Activated T-helper 1 cell treated with anti-CD3 and anti-CD28 coated beads, Interleukin-12 subunit alpha, Interleukin-12 subunit beta, Interleukin-2, Interleukin-4 antibody, amounts not matched to agents 30 ng/mL and 10 ng/mL and 1 ng/mL, durations not matched to agents 14 hours and 24 hours and 36 hours (primary cell): ENCODE measurements at regions of chr10 and their contacts with region 1.

Region 1: GRCh38 chr10:62811159-62811875 is 4.8 kb downstream of the EGR2 start:
- DNase-seq: peak; percentile 71
- H3K4me3 Mint-ChIP-seq: peak overlapping the region; percentile 98
- H3K27ac Mint-ChIP-seq: peak overlapping the region; percentile 94
- H3K4me1 Mint-ChIP-seq: peaks cover 84% of the 10 kb centered on the region
- H3K27me3 Mint-ChIP-seq: peaks cover 8% of the 10 kb centered on the region

Region 2: DNA sequence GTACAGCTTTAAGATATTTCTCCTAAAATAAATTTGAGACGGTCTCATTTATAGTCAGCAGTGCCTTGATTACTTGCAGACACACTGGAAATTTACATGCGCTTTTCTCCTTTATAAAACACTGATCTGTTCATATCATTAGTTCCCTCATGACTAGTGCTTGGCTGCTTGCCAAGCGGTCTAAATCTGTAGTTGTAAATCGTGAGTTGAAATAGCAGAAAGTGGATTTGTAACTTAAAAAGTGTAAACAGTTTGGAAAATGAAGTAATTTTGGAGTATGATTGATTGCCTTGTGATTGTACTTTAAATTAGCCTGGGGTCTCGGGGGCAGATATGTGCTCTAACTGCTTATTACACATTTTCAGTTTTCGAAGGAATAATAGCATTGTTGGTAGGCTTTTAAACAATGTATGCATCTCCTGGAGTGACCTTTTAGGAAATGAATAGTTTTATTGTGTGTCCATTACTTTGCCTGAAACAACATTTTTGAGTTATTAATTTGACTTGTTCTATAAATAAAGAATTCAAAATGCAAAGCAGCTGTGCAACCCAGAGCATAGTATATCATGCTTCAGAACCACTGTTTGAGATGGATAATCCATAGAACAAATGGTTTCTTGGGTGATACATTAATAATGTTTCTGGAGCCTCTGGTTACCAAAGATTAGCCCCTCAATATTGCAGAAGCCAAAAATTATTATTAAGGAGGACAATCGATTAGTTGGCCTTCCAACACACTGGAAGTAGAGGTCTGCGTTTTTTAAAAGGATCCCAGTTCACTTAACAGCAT is 836.5 kb before region 1 on chr10:
- intact Hi-C with region 1: no loop called
- DNase-seq: no peak
- H3K4me3 Mint-ChIP-seq: no peak overlapping the region
- H3K27ac Mint-ChIP-seq: no peak overlapping the region
- H3K4me1 Mint-ChIP-seq: peaks cover 57% of the 10 kb centered on the region
- H3K27me3 Mint-ChIP-seq: no peaks in the 10 kb centered on the region

Region 3: GRCh38 chr10:62594093-62594520 is 217.2 kb before region 1 on chr10:
- intact Hi-C with region 1: loop called (anchors 1 kb)
- DNase-seq: peak; percentile 27
- H3K4me3 Mint-ChIP-seq: no peak overlapping the region
- H3K27ac Mint-ChIP-seq: no peak overlapping the region
- H3K4me1 Mint-ChIP-seq: peaks cover 19% of the 10 kb centered on the region
- H3K27me3 Mint-ChIP-seq: peaks cover 23% of the 10 kb centered on the region

Region 4: GRCh38 chr10:62653254-62653653 is 158.1 kb before region 1 on chr10:
- intact Hi-C with region 1: loop called (anchors 1 kb)
- DNase-seq: no peak
- H3K4me3 Mint-ChIP-seq: no peak overlapping the region
- H3K27ac Mint-ChIP-seq: peak overlapping the region; percentile 6
- H3K4me1 Mint-ChIP-seq: peaks cover 50% of the 10 kb centered on the region
- H3K27me3 Mint-ChIP-seq: no peaks in the 10 kb centered on the region

Region 5: GRCh38 chr10:62779487-62780248 is 31.6 kb before region 1 on chr10:
- intact Hi-C with region 1: loop called (anchors 1 kb)
- DNase-seq: peak; percentile 48
- H3K4me3 Mint-ChIP-seq: peak overlapping the region; percentile 27
- H3K27ac Mint-ChIP-seq: peak overlapping the region; percentile 76
- H3K4me1 Mint-ChIP-seq: peaks cover 45% of the 10 kb centered on the region
- H3K27me3 Mint-ChIP-seq: peaks cover 19% of the 10 kb centered on the region

Region 6: GRCh38 chr10:63133056-63133820 is 321.9 kb after region 1 on chr10 and contains the start of gene NRBF2:
- intact Hi-C with region 1: loop called (anchors 1 kb)
- DNase-seq: peak; percentile 97
- H3K4me3 Mint-ChIP-seq: peak within 1 kb of the TSS; percentile 91
- H3K27ac Mint-ChIP-seq: peak within 1 kb of the TSS; percentile 83
- H3K4me1 Mint-ChIP-seq: peaks cover 32% of the 10 kb centered on the region
- H3K27me3 Mint-ChIP-seq: peaks cover 3% of the 10 kb centered on the region
- total RNA-seq, gene NRBF2: 30.0 and 30.8 TPM in 2 replicates